ENCODE measurements at regions of chr3 and their contacts with region 1.

Region 1: GRCh38 chr3:129316131-129317013 is 37.7 kb downstream of the HMCES start:
- DNase-seq: no peak
- H3K4me3 ChIP-seq: peak overlapping the region; percentile 88 to 92
- H3K27ac ChIP-seq: peak overlapping the region; percentile 97
- H3K4me1 ChIP-seq: peaks cover 23% of the 10 kb centered on the region
- H3K27me3 ChIP-seq: no peaks in the 10 kb centered on the region
- CTCF ChIP-seq: peak; percentile 21 to 77 (median 31)
- POLR2A ChIP-seq: peak in 1 of 2 donors; percentile 98

Region 2: DNA sequence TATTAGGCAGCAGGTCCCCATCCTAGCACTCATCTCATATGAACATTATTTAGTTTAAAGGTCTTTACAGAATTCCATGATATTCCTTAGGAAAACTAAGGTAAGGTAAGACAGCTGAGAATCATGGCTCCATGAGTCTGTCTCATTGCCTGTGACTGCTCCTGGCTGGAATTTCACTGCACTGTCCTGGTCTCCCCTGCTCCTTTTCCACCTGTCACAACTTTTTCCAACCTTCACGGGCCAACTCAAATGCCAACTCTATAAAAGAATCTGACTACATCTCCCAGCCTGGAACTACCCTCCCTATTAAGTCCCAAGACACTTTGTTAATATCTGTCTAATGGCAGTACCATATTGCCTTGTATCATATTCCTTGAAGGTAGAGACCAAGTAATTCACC is 140.3 kb before region 1 on chr3:
- intact Hi-C with region 1: loop called (anchors 10 kb)
- DNase-seq: no peak
- H3K4me3 ChIP-seq: no peak overlapping the region
- H3K27ac ChIP-seq: no peak overlapping the region
- H3K4me1 ChIP-seq: peaks cover 93% of the 10 kb centered on the region
- H3K27me3 ChIP-seq: no peaks in the 10 kb centered on the region
- CTCF ChIP-seq: no peak
- POLR2A ChIP-seq: no peak

Region 3: DNA sequence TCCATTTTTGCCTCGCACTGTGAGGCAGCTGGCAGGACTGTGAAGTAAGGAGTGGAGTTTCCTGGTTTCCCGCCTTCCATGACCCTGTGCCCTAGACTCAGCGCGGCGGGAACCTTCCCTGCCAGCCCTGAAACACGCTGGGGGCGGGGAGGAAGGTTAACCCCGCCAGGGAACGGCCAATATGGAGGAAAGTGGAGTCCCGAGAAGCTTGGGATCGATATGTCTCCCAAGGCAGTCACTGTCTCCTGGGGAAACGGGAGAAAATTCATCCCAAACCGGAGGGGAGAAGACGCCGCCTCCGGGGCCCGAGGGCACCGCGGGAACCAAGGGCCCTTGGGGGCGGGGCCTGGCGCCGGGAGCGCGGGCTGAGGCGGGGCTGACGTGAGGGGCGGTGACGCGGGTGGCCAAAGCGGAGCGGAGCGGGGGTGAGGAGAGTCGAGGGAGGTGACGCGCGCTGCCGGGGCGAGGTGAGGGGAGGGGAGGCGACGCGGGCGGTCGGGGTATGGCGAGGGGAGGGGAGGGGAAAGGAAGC is 37.9 kb before region 1 on chr3 and contains the start of gene HMCES:
- intact Hi-C with region 1: loop called (anchors 2 kb)
- DNase-seq: no peak
- H3K4me3 ChIP-seq: peak within 1 kb of the TSS; percentile 71 to 93
- H3K27ac ChIP-seq: peak within 1 kb of the TSS; percentile 96
- H3K4me1 ChIP-seq: peaks cover 42% of the 10 kb centered on the region
- H3K27me3 ChIP-seq: no peaks in the 10 kb centered on the region
- CTCF ChIP-seq: no peak
- POLR2A ChIP-seq: peak in 1 of 2 donors; percentile 58
- total RNA-seq, gene HMCES: 16.9 TPM